Heart left ventricle (tissue), 16 donors: ENCODE measurements at regions of chr1 and their contacts with region 1.

Region 1: DNA sequence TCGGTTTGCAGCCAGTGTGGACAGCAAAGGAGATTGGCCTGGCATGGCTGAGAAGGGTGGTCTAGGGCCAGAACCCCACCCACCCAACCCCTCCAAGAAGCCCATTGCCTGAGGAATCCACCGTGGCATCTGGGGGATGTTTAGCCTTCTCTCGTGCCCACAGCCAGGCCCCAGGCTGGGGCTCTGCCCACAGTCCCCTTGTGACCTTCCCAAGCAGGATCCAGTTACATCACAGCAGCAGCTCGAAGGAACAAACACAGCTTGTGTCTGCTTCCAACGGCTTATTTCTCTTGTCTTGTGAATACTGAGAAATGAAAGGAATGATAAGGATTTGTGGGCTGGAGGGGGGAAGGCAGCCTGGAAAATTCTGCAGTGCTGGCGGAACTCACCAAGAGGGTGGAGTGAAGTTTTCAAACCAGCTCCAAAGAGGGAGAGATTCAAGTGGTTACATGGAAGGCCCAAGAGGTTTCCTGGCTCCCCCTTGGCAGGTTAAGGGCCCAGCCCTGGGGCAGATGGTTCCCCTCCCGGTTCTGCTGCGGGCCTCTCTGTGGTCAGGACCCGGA is 61.6 kb downstream of the DHRS3 start:
- DNase-seq: peak in 4 of 5 donors; percentile 42 to 77 (median 61)
- ATAC-seq: peak; percentile 24 to 71 (median 70)
- H3K4me3 ChIP-seq: no peak overlapping the region
- H3K27ac ChIP-seq: peak overlapping the region in 11 of 12 donors; percentile 24 to 87 (median 71)
- H3K4me1 ChIP-seq: peaks cover 0 to 48% (median 22%) of the 10 kb centered on the region in 12 donors
- H3K27me3 ChIP-seq: no peaks in the 10 kb centered on the region
- CTCF ChIP-seq: no peak
- POLR2A ChIP-seq: no peak

Region 2: DNA sequence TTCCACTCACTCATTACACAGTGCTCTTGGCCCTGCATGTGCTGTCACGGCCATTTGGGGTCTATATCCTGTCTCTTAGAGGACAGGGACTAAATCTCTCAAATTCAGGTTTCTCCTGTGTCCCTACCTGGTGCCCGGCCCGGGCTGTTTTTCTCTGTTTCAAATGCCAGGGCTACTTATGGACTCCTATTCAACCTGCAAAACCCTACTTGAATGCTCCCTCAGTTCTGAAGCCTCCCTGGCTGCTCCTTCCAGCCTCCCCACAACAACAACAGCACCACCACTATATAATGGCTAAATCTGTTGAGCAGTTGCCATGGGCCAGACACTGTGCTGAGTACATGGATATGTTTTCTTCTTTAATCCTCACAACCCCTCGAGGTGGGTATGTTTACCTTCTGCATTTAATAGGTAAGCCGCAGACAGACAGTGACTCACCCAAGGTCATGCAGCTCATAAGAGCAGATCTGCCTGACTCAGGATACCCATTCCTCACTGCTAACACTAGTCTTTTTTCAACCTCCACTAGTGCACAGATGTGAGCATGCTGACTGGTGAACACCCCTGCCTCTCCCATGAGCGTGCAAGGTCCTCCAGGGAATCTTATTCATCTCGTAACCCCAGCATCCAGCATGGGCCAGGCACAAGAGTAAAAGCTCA is 31.7 kb after region 1 on chr1:
- intact Hi-C with region 1: loop called in 4 of 10 experiments (anchors 2 to 5 kb)
- DNase-seq: peak in 1 of 5 donors; percentile 3
- ATAC-seq: no peak
- H3K4me3 ChIP-seq: no peak overlapping the region
- H3K27ac ChIP-seq: no peak overlapping the region
- H3K4me1 ChIP-seq: peaks cover 8 to 61% (median 34%) of the 10 kb centered on the region in 12 donors
- H3K27me3 ChIP-seq: no peaks in the 10 kb centered on the region
- CTCF ChIP-seq: no peak
- POLR2A ChIP-seq: no peak

Region 3: GRCh38 chr1:12596007-12596821 is 39.8 kb after region 1 on chr1:
- intact Hi-C with region 1: loop called in 4 of 10 experiments (anchors 5 kb)
- DNase-seq: peak; percentile 82 to 95 (median 92)
- ATAC-seq: peak; percentile 31 to 76 (median 73)
- H3K4me3 ChIP-seq: peak overlapping the region in 11 of 12 donors; percentile 14 to 56 (median 42)
- H3K27ac ChIP-seq: peak overlapping the region; percentile 84 to 99 (median 90)
- H3K4me1 ChIP-seq: peaks cover 14 to 100% (median 89%) of the 10 kb centered on the region in 12 donors
- H3K27me3 ChIP-seq: no peaks in the 10 kb centered on the region
- CTCF ChIP-seq: no peak
- POLR2A ChIP-seq: peak in 1 of 2 donors; percentile 17